ENCODE measurements at regions of chr16 and their contacts with region 1.

Region 1: DNA sequence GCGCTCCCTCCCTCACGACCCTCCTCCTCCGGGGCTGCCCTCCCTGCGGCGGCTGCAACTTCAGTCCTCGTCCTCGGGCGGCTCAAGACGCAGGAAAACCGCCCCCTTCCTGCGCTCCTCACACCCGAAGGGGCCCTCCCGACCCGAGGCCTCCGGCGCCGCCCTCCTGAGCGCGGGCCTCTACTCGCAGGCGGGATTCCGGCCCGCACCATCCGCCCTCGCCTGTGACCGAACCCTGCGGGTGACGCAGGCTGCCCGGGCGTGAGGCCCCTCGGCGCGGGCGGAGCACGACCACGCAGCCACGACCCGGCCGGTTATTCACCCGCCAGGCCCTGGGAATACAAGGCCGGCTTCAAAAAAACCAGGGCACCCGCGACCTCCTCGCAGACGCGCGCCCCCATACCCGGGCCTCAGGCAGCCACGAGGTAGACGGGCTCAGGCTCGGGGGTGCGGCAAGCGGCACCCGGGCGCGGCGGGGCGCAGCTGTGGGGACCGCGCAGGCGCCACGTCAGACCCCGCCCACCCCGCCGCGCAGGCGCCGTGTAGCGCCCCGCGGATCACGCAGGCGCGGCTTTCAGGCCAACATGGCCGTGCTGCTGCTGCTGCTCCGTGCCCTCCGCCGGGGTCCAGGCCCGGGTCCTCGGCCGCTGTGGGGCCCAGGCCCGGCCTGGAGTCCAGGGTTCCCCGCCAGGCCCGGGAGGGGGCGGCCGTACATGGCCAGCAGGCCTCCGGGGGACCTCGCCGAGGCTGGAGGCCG is at the start of gene SPG7:
- DNase-seq: peak; percentile 90
- H3K4me3 ChIP-seq: peak within 1 kb of the TSS; percentile 68 to 90 (median 74)
- H3K27ac ChIP-seq: peak within 1 kb of the TSS; percentile 89 to 96 (median 93)
- H3K4me1 ChIP-seq: peaks cover 0 to 38% (median 32%) of the 10 kb centered on the region in 4 donors
- H3K27me3 ChIP-seq: no peaks in the 10 kb centered on the region
- CTCF ChIP-seq: no peak
- EP300 ChIP-seq: no peak
- POLR2A ChIP-seq: peak; percentile 46 to 58
- total RNA-seq, gene SPG7: 69.4 to 211 (median 113) TPM

Region 2: GRCh38 chr16:89246903-89247733 is 260.9 kb before region 1 on chr16:
- intact Hi-C with region 1: loop called (anchors 5 kb)
- DNase-seq: peak; percentile 95
- H3K4me3 ChIP-seq: peak overlapping the region; percentile 40 to 60 (median 52)
- H3K27ac ChIP-seq: peak overlapping the region; percentile 34 to 57 (median 50)
- H3K4me1 ChIP-seq: peaks cover 0 to 18% (median 10%) of the 10 kb centered on the region in 4 donors
- H3K27me3 ChIP-seq: peaks cover 0 to 5% (median 0%) of the 10 kb centered on the region in 3 donors
- CTCF ChIP-seq: no peak
- EP300 ChIP-seq: no peak
- POLR2A ChIP-seq: no peak

Region 3: DNA sequence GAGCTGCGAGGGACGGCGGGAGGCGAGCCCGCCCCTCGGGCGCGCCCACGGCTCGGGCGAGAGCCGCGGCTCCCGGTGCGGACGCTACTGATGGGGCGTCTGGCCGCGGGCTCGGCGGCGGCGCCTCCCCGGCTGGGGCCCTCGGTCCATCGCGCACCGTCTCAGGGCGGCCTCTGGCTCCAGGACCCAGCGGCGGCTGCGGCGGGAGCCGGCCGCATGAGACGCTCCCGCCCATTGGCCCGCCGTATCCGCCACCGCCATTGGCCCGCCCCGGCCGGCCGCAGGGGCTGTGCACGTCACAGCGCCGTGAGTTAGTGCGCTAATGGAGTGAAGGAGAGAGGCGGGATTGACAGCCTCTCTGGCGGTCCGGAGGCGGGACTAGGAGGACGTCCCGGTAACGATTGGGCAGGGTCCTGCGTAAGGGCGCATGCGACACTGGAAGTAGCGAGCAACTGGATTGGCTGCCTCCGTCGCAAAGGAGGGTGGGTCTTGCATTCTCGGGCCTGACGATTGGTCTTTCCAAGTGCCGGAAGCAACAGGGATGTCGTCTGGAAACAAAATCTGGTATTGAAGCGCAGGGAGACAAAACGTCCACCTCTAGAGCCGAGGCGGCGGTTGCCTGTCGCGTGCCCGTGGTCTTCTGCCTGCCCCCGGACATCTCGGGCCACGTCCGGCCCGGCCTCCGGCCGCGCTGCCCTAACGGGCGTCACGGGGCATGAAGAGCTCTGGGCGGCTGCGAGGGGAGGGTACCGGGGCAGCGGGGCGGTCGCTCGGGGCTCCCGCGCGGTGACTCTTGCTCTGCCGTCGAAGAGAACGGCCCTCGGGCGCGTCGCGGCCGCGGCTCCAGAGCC is 17.4 kb before region 1 on chr16 and contains the start of gene ANKRD11:
- intact Hi-C with region 1: loop called (anchors 1 kb)
- DNase-seq: peak; percentile 100
- H3K4me3 ChIP-seq: peak within 1 kb of the TSS; percentile 69 to 98 (median 95)
- H3K27ac ChIP-seq: peak within 1 kb of the TSS; percentile 95 to 100 (median 98)
- H3K4me1 ChIP-seq: peaks cover 0 to 48% (median 42%) of the 10 kb centered on the region in 4 donors
- H3K27me3 ChIP-seq: no peaks in the 10 kb centered on the region
- CTCF ChIP-seq: no peak
- EP300 ChIP-seq: no peak
- POLR2A ChIP-seq: peak; percentile 37 to 44
- total RNA-seq, gene ANKRD11: 42.6 to 161 (median 48.8) TPM

Measured in sigmoid colon (tissue), 7 donors.